ENCODE measurements at regions of chr12 and their contacts with region 1.

Region 1: DNA sequence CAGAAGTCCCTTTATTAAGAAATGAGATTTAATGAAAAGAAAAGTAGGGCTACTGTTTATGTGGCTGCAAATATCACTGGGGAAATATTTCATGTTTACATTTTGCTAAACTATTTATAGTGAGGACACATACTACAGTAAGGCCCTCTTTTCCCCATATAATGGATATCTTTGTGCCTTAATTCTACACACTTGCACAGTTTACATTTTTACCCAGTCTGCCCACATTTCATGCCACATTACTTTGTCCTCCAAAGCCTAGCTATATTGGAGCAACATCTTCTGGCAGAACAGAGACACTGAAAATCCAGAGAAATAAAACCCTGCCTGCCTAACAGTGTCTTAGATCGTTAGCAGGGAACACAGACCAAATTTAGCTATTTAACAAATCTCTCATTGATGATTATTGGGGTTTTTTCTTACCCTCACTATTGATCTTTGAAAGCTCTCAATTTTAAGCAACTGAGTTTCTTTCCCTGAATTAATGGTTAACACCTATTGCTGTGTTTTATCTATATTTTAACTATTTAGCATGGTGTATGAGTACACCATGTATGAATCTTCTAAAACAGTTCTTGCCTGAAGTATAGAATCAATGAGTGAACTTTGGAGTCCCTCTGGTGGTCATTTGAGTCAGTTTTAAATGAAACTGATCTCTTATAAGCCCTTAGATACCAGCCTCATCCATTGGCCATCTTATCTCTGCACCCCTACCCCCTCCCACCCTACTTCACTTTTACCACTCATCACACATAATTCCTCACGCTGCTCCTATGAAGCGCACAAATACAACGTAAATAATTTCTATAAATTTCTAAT is 170.2 kb downstream of the BCAT1 start:
- DNase-seq: peak; percentile 75
- ATAC-seq: peak; percentile 92
- H3K4me3 ChIP-seq: no peak overlapping the region
- H3K27ac ChIP-seq: no peak overlapping the region
- H3K4me1 ChIP-seq: peaks cover 4% of the 10 kb centered on the region; the same call in 1 of the 2 replicates
- H3K27me3 ChIP-seq: no peaks in the 10 kb centered on the region; the same call in 1 of the 2 replicates
- CTCF ChIP-seq: peak; percentile 62
- POLR2A ChIP-seq: no peak
- RAD21 ChIP-seq: peak; percentile 80

Region 2: DNA sequence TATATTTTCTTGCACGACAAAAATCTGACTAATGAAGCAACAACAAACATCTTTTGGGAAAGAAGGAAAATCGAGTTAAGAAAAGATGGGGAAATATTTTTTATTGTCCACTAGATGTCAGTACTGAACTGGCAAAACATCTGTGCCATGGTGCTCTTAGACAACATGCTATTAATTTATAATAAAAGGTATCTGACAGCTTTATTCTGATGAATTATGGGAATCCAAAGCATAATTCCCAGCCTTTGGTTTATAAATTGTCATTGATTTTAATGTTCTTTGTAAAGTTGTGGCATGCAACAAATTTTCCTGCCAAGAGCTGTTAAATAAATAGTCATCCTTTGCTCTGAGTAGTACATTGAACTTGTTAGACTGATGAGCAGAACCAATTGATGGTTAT is 1922.5 kb before region 1 on chr12:
- CTCF ChIA-PET with region 1: no interaction called
- POLR2A ChIA-PET with region 1: no interaction called
- dilution Hi-C with region 1: no loop called
- in situ Hi-C with region 1: loop called (anchors 25 kb)
- intact Hi-C with region 1: loop called (anchors 5 kb)
- DNase-seq: peak; percentile 45
- ATAC-seq: 0 out of 2 replicates have a peak, but pooled peaks have one; percentile 27
- H3K4me3 ChIP-seq: no peak overlapping the region
- H3K27ac ChIP-seq: no peak overlapping the region
- H3K4me1 ChIP-seq: no peaks in the 10 kb centered on the region
- H3K27me3 ChIP-seq: peaks cover 12% of the 10 kb centered on the region
- CTCF ChIP-seq: peak; percentile 70
- POLR2A ChIP-seq: no peak
- RAD21 ChIP-seq: peak; percentile 86

Region 3: DNA sequence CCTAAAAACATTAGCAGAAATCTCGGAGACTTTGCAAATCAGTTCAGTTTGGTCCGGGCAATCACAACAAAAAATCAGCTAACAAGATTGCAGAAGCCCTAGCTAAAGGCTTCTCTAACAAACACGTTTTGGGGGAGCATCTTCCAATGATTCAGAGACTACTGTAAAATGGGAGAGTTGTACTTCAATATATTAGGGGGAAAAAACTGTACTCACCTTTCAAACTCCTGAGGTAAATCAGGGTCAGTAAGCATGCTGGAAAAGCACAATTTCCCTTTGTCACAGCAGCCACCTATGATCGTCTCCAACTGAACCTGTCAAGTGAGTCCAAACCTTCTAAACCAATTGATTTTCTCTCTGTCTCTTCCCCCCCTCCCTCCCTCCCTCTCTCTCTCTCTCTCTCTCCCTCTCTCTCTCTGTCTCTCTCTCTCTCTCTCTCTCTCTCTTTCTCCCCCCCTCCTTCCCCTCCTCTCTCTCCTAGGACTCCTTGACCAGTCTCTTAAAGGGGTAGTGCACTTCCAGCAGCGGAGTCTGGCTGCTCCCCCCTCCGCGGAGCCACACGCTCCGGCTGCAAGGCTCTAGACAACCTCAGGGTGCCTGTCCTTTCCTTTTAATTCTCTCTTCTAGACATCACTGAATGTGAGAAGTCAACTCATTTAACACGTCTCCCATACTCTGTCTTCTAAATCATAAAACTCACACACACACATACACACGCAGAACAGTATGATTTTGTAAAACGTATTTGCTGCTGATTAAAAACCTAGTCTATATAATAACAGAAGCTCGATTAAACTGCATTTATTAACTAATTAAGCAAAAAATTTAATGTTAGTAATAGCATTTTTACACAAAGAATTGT is 829.1 kb before region 1 on chr12 and contains the start of gene SOX5:
- CTCF ChIA-PET with region 1: no interaction called
- POLR2A ChIA-PET with region 1: no interaction called
- dilution Hi-C with region 1: no loop called
- in situ Hi-C with region 1: no loop called
- intact Hi-C with region 1: loop called (anchors 10 kb)
- DNase-seq: peak; percentile 68
- ATAC-seq: peak; percentile 83
- H3K4me3 ChIP-seq: peak within 1 kb of the TSS; percentile 66
- H3K27ac ChIP-seq: no peak within 1 kb of the TSS
- H3K4me1 ChIP-seq: no peaks in the 10 kb centered on the region
- H3K27me3 ChIP-seq: no peaks in the 10 kb centered on the region
- CTCF ChIP-seq: no peak
- POLR2A ChIP-seq: no peak
- RAD21 ChIP-seq: no peak
- total RNA-seq, gene SOX5: 11.9 and 13.1 TPM in 2 replicates

Region 4: GRCh38 chr12:24278832-24279231 is 499.9 kb before region 1 on chr12:
- CTCF ChIA-PET with region 1: no interaction called
- POLR2A ChIA-PET with region 1: no interaction called
- dilution Hi-C with region 1: no loop called
- in situ Hi-C with region 1: no loop called
- intact Hi-C with region 1: loop called (anchors 10 kb)
- DNase-seq: no peak
- ATAC-seq: no peak
- H3K4me3 ChIP-seq: no peak overlapping the region
- H3K27ac ChIP-seq: no peak overlapping the region
- H3K4me1 ChIP-seq: peaks cover 4% of the 10 kb centered on the region
- H3K27me3 ChIP-seq: no peaks in the 10 kb centered on the region
- CTCF ChIP-seq: 0 out of 2 replicates have a peak, but pooled peaks have one; percentile 6
- POLR2A ChIP-seq: no peak
- RAD21 ChIP-seq: no peak

Region 5: GRCh38 chr12:24664161-24664880 is 114.4 kb before region 1 on chr12:
- CTCF ChIA-PET with region 1: interaction called, 11 read pairs
- POLR2A ChIA-PET with region 1: no interaction called
- dilution Hi-C with region 1: no loop called
- in situ Hi-C with region 1: no loop called
- intact Hi-C with region 1: no loop called
- DNase-seq: peak; percentile 33
- ATAC-seq: no peak
- H3K4me3 ChIP-seq: no peak overlapping the region
- H3K27ac ChIP-seq: no peak overlapping the region
- H3K4me1 ChIP-seq: peaks cover 1% of the 10 kb centered on the region; the same call in 1 of the 2 replicates
- H3K27me3 ChIP-seq: no peaks in the 10 kb centered on the region
- CTCF ChIP-seq: no peak
- POLR2A ChIP-seq: no peak
- RAD21 ChIP-seq: no peak

Region 6: DNA sequence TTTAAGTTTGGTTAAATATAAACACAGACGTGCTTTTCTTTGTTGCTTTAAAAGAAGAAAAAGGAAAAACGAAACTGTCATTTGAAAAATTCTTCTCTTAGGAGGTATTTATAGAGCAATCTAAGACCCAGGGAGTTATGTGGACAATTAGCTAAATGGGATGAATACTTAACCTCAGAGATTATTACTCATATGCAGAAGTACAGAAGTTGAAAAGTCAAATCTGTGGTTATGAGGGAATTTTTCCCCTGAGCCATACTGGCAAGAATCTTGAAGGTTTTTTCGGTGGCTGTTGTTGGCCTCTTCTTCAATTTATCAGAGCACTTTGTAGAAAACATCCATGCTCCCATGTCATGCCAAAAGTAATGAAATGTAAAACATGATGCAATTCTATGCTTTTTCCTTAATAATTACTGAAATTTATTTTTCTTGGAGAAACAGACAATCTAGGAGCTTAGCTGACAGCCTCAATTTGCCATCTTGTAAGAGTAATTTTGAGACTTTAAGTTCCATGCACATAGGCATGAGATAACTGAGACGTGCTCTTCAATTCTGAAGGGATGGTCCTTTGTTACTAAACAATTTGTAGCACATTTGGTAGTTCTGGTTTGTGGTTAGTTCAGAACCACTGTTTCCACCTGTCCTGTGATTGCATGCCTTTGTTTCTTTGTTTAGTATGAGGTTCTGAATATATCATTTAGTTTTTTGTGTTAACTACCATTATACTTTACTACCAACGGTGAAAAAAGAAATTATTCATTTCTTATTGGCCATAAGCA is 43.6 kb after region 1 on chr12:
- CTCF ChIA-PET with region 1: no interaction called
- POLR2A ChIA-PET with region 1: no interaction called
- dilution Hi-C with region 1: no loop called
- in situ Hi-C with region 1: no loop called
- intact Hi-C with region 1: no loop called
- DNase-seq: peak; percentile 81
- ATAC-seq: peak; percentile 71
- H3K4me3 ChIP-seq: no peak overlapping the region
- H3K27ac ChIP-seq: no peak overlapping the region
- H3K4me1 ChIP-seq: peaks cover 6% of the 10 kb centered on the region
- H3K27me3 ChIP-seq: no peaks in the 10 kb centered on the region
- CTCF ChIP-seq: no peak
- POLR2A ChIP-seq: no peak
- RAD21 ChIP-seq: no peak

Region 7: DNA sequence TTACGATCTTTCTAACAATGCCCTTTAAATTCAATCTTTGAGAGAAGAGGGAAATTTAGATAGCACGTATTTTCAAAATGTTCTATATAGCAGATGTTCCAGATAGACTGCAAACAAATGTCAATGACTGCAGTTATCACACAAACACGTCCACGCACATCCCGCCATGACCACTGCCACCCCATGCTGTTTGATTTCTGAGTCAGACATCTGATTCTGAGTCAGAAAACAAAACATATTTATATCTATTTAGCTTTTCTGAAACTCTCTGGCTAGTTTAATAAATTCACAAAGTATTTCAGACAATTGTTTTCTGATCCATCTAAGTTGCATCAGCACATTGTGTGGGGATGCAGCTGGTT is 276.1 kb after region 1 on chr12:
- CTCF ChIA-PET with region 1: no interaction called
- POLR2A ChIA-PET with region 1: no interaction called
- dilution Hi-C with region 1: no loop called
- in situ Hi-C with region 1: no loop called
- intact Hi-C with region 1: no loop called
- DNase-seq: peak; percentile 66
- ATAC-seq: peak; percentile 79
- H3K4me3 ChIP-seq: no peak overlapping the region
- H3K27ac ChIP-seq: no peak overlapping the region
- H3K4me1 ChIP-seq: no peaks in the 10 kb centered on the region
- H3K27me3 ChIP-seq: no peaks in the 10 kb centered on the region; the same call in 1 of the 2 replicates
- CTCF ChIP-seq: no peak
- POLR2A ChIP-seq: no peak
- RAD21 ChIP-seq: no peak

Region 8: DNA sequence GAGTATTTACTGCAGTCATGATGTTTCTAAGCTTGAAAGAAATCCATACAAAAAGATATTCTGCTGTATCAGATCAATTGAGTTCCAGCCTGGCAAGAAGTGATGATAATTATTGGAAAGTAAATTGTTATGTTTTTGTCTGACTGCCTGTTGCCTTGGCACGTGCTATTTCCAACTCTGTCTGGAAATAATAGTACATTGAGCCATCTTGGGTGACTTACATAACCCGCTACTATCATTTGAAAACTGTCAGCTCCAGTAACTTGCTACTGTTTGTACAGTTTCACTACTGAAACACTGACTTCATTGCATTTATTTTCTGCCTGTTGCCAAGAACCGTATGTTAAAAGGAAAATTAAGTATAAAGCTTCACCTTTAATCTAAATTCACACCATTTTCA is 1735.7 kb after region 1 on chr12:
- CTCF ChIA-PET with region 1: no interaction called
- POLR2A ChIA-PET with region 1: no interaction called
- dilution Hi-C with region 1: no loop called
- in situ Hi-C with region 1: no loop called
- intact Hi-C with region 1: no loop called
- DNase-seq: no peak
- ATAC-seq: no peak
- H3K4me3 ChIP-seq: no peak overlapping the region
- H3K27ac ChIP-seq: no peak overlapping the region
- H3K4me1 ChIP-seq: no peaks in the 10 kb centered on the region
- H3K27me3 ChIP-seq: no peaks in the 10 kb centered on the region
- CTCF ChIP-seq: no peak
- POLR2A ChIP-seq: no peak
- RAD21 ChIP-seq: no peak

Measured in IMR-90 (cell line).